H1 (cell line): ENCODE measurements at regions of chr9 and their contacts with region 1.

Region 1: GRCh38 chr9:36873247-36873875 is 160.7 kb downstream of the PAX5 start:
- DNase-seq: peak in 1 of 2 experiments; percentile 89
- H3K4me3 ChIP-seq: no peak overlapping the region
- H3K27ac ChIP-seq: no peak overlapping the region
- H3K4me1 ChIP-seq: no peaks in the 10 kb centered on the region; a peak in 1 of 7 replicates
- H3K27me3 ChIP-seq: peaks cover 0 to 2% (median 0%) of the 10 kb centered on the region in 4 experiments; a peak in 1 of 7 replicates
- CTCF ChIP-seq: peak; percentile 93 to 98 (median 95)
- EP300 ChIP-seq: no peak
- POLR2A ChIP-seq: no peak
- RAD21 ChIP-seq: peak; percentile 94 to 98

Region 2: GRCh38 chr9:36788534-36788933 is 84.8 kb before region 1 on chr9:
- CTCF ChIA-PET with region 1: interaction called, 63 read pairs
- POLR2A ChIA-PET with region 1: no interaction called
- DNase-seq: peak in 1 of 2 experiments; percentile 78
- H3K4me3 ChIP-seq: no peak overlapping the region
- H3K27ac ChIP-seq: no peak overlapping the region
- H3K4me1 ChIP-seq: no peaks in the 10 kb centered on the region
- H3K27me3 ChIP-seq: no peaks in the 10 kb centered on the region; a peak in 1 of 7 replicates
- CTCF ChIP-seq: peak; percentile 53 to 67 (median 55)
- EP300 ChIP-seq: no peak
- POLR2A ChIP-seq: no peak
- RAD21 ChIP-seq: peak; percentile 28 to 47; a peak in 3 of 4 replicates

Region 3: GRCh38 chr9:36855448-36856315 is 17.7 kb before region 1 on chr9:
- CTCF ChIA-PET with region 1: interaction called, 82 read pairs
- POLR2A ChIA-PET with region 1: interaction called, 3 read pairs
- DNase-seq: peak in 1 of 2 experiments; percentile 76
- H3K4me3 ChIP-seq: no peak overlapping the region
- H3K27ac ChIP-seq: no peak overlapping the region
- H3K4me1 ChIP-seq: peaks cover 0 to 7% (median 1%) of the 10 kb centered on the region in 4 experiments; a peak in 4 of 7 replicates
- H3K27me3 ChIP-seq: no peaks in the 10 kb centered on the region
- CTCF ChIP-seq: peak; percentile 75
- EP300 ChIP-seq: no peak
- POLR2A ChIP-seq: no peak
- RAD21 ChIP-seq: peak; percentile 60 to 68

Region 4: GRCh38 chr9:36903541-36904435 is 30.4 kb after region 1 on chr9:
- CTCF ChIA-PET with region 1: interaction called, 99 read pairs
- POLR2A ChIA-PET with region 1: no interaction called
- DNase-seq: no peak
- H3K4me3 ChIP-seq: no peak overlapping the region
- H3K27ac ChIP-seq: no peak overlapping the region
- H3K4me1 ChIP-seq: peaks cover 0 to 3% (median 2%) of the 10 kb centered on the region in 4 experiments; a peak in 4 of 7 replicates
- H3K27me3 ChIP-seq: no peaks in the 10 kb centered on the region
- CTCF ChIP-seq: no peak
- EP300 ChIP-seq: no peak
- POLR2A ChIP-seq: no peak
- RAD21 ChIP-seq: no peak

Region 5: GRCh38 chr9:36949466-36949865 is 76.1 kb after region 1 on chr9:
- CTCF ChIA-PET with region 1: interaction called, 38 read pairs
- POLR2A ChIA-PET with region 1: no interaction called
- DNase-seq: no peak
- H3K4me3 ChIP-seq: no peak overlapping the region
- H3K27ac ChIP-seq: no peak overlapping the region
- H3K4me1 ChIP-seq: peaks cover 0 to 4% (median 1%) of the 10 kb centered on the region in 4 experiments; a peak in 1 of 7 replicates
- H3K27me3 ChIP-seq: no peaks in the 10 kb centered on the region; a peak in 1 of 7 replicates
- CTCF ChIP-seq: no peak
- EP300 ChIP-seq: no peak
- POLR2A ChIP-seq: no peak
- RAD21 ChIP-seq: no peak

Region 6: GRCh38 chr9:36995927-36996705 is 122.8 kb after region 1 on chr9:
- CTCF ChIA-PET with region 1: interaction called, 657 read pairs
- POLR2A ChIA-PET with region 1: interaction called, 5 read pairs
- DNase-seq: peak; percentile 68 to 91
- H3K4me3 ChIP-seq: peak overlapping the region in 1 of 4 experiments; percentile 37; a peak in 3 of 8 replicates
- H3K27ac ChIP-seq: no peak overlapping the region
- H3K4me1 ChIP-seq: peaks cover 0 to 10% (median 3%) of the 10 kb centered on the region in 4 experiments; a peak in 4 of 7 replicates
- H3K27me3 ChIP-seq: peaks cover 0 to 20% (median 19%) of the 10 kb centered on the region in 4 experiments; a peak in 6 of 7 replicates
- CTCF ChIP-seq: peak; percentile 88 to 93 (median 92)
- EP300 ChIP-seq: no peak; a peak in 1 of 3 replicates
- POLR2A ChIP-seq: no peak
- RAD21 ChIP-seq: peak; percentile 94 to 96